Activated CD8-positive, alpha-beta memory T cell treated with anti-CD3 and anti-CD28 coated beads, Interleukin-2, amount 10 ng/mL, durations not matched to agents 7 days and 5 days (primary cell): ENCODE measurements at regions of chr17 and their contacts with region 1.

Region 1: GRCh38 chr17:77054936-77055335 is 85.8 kb upstream of the SEC14L1 start:
- DNase-seq: no peak
- ATAC-seq: no peak
- H3K4me3 Mint-ChIP-seq: no peak overlapping the region
- H3K27ac Mint-ChIP-seq: no peak overlapping the region
- H3K4me1 Mint-ChIP-seq: no peaks in the 10 kb centered on the region
- H3K27me3 Mint-ChIP-seq: peaks cover 7% of the 10 kb centered on the region

Region 2: DNA sequence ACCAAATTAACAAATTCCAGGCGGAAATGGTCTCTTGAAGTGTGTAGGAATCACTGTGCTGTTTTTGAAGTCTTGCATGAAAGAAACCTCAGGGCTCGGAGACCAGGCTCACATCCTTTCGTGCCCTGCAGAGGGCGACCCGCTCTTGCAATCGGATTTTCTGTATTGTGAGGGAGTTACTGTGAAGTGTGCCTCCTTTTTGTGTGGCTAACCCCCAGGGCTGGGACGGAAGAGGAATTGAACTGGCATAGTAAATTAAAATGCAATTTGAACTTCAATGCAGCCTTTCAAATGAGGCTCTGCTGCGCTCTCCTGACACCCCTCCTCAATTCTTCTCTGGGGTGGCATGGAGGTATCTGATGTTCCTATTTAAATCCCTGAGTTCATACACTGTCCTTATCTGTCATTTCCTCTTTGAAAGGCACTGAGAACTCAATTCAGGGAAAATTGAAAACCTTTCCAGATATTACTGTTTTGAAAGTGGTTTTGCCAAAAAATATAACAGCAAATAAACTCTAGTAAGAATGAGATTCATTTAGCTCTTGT is 238.3 kb before region 1 on chr17:
- CTCF ChIA-PET with region 1: interaction called, 16 read pairs
- DNase-seq: peak; percentile 80
- ATAC-seq: peak; percentile 91
- H3K4me3 Mint-ChIP-seq: no peak overlapping the region
- H3K27ac Mint-ChIP-seq: no peak overlapping the region
- H3K4me1 Mint-ChIP-seq: peaks cover 7% of the 10 kb centered on the region
- H3K27me3 Mint-ChIP-seq: peaks cover 11% of the 10 kb centered on the region

Region 3: GRCh38 chr17:76868176-76868668 is 186.7 kb before region 1 on chr17 and contains the start of gene MGAT5B:
- CTCF ChIA-PET with region 1: interaction called, 121 read pairs
- DNase-seq: peak; percentile 74
- ATAC-seq: peak; percentile 97
- H3K4me3 Mint-ChIP-seq: peak within 1 kb of the TSS; percentile 38
- H3K27ac Mint-ChIP-seq: no peak within 1 kb of the TSS
- H3K4me1 Mint-ChIP-seq: peaks cover 13% of the 10 kb centered on the region
- H3K27me3 Mint-ChIP-seq: peaks cover 41% of the 10 kb centered on the region
- total RNA-seq, gene MGAT5B: 0.18 to 0.68 TPM

Region 4: GRCh38 chr17:77011173-77012011 is 43.5 kb before region 1 on chr17:
- CTCF ChIA-PET with region 1: interaction called, 27 read pairs
- DNase-seq: peak; percentile 68
- ATAC-seq: peak; percentile 42
- H3K4me3 Mint-ChIP-seq: no peak overlapping the region
- H3K27ac Mint-ChIP-seq: no peak overlapping the region
- H3K4me1 Mint-ChIP-seq: no peaks in the 10 kb centered on the region
- H3K27me3 Mint-ChIP-seq: peaks cover 41% of the 10 kb centered on the region

Region 5: DNA sequence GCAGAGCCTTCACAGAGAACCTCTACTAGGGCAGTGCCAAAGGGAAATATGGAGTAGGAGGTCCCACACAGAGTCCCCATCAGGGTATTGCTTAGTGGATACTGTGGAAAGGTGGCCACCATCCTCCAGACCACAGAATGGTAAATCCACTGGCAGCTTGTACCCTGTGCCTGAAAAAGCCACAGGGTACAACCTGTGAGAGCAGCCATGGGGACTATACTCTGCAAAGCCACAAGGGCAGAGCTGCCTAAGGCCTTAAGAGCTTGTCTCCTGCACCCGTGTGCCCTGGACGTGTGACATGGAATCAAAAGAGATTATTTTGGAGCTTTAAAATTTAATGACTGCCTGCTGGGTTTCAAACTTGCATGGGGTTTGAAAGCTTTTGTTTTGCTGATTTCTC is 32.2 kb before region 1 on chr17:
- CTCF ChIA-PET with region 1: interaction called, 13 read pairs
- DNase-seq: no peak
- ATAC-seq: no peak
- H3K4me3 Mint-ChIP-seq: no peak overlapping the region
- H3K27ac Mint-ChIP-seq: no peak overlapping the region
- H3K4me1 Mint-ChIP-seq: no peaks in the 10 kb centered on the region
- H3K27me3 Mint-ChIP-seq: peaks cover 5% of the 10 kb centered on the region

Region 6: GRCh38 chr17:77068915-77069314 is 14.0 kb after region 1 on chr17:
- CTCF ChIA-PET with region 1: interaction called, 36 read pairs
- DNase-seq: no peak
- ATAC-seq: no peak
- H3K4me3 Mint-ChIP-seq: no peak overlapping the region
- H3K27ac Mint-ChIP-seq: no peak overlapping the region
- H3K4me1 Mint-ChIP-seq: no peaks in the 10 kb centered on the region
- H3K27me3 Mint-ChIP-seq: peaks cover 56% of the 10 kb centered on the region